ENCODE measurements at regions of chr7 and their contacts with region 1.

Region 1: GRCh38 chr7:145036604-145037405 is 201.0 kb upstream of the TPK1 start:
- DNase-seq: peak; percentile 45
- ATAC-seq: peak; percentile 57
- H3K4me3 Mint-ChIP-seq: no peak overlapping the region
- H3K27ac Mint-ChIP-seq: no peak overlapping the region
- H3K4me1 Mint-ChIP-seq: no peaks in the 10 kb centered on the region
- H3K27me3 Mint-ChIP-seq: peaks cover 15% of the 10 kb centered on the region

Region 2: GRCh38 chr7:144565586-144565985 is 471.2 kb before region 1 on chr7:
- CTCF ChIA-PET with region 1: no interaction called
- POLR2A ChIA-PET with region 1: no interaction called
- intact Hi-C with region 1: no loop called
- DNase-seq: no peak
- ATAC-seq: no peak
- H3K4me3 Mint-ChIP-seq: no peak overlapping the region
- H3K27ac Mint-ChIP-seq: no peak overlapping the region
- H3K4me1 Mint-ChIP-seq: no peaks in the 10 kb centered on the region
- H3K27me3 Mint-ChIP-seq: no peaks in the 10 kb centered on the region

Region 3: GRCh38 chr7:145169942-145170341 is 133.1 kb after region 1 on chr7:
- CTCF ChIA-PET with region 1: no interaction called
- POLR2A ChIA-PET with region 1: no interaction called
- intact Hi-C with region 1: loop called in 1 of 2 experiments (anchors 5 kb)
- DNase-seq: no peak
- ATAC-seq: no peak
- H3K4me3 Mint-ChIP-seq: no peak overlapping the region
- H3K27ac Mint-ChIP-seq: no peak overlapping the region
- H3K4me1 Mint-ChIP-seq: no peaks in the 10 kb centered on the region
- H3K27me3 Mint-ChIP-seq: peaks cover 4% of the 10 kb centered on the region

Region 4: GRCh38 chr7:145848691-145849090 is 811.9 kb after region 1 on chr7:
- CTCF ChIA-PET with region 1: no interaction called
- POLR2A ChIA-PET with region 1: no interaction called
- intact Hi-C with region 1: loop called in 1 of 2 experiments (anchors 2 kb)
- DNase-seq: no peak
- ATAC-seq: no peak
- H3K4me3 Mint-ChIP-seq: no peak overlapping the region
- H3K27ac Mint-ChIP-seq: no peak overlapping the region
- H3K4me1 Mint-ChIP-seq: no peaks in the 10 kb centered on the region
- H3K27me3 Mint-ChIP-seq: no peaks in the 10 kb centered on the region

Measured in activated CD4-positive, alpha-beta T cell treated with anti-CD3 and anti-CD28 coated beads for 36 hours (primary cell).